ENCODE measurements at regions of chr2 and their contacts with region 1.

Region 1: DNA sequence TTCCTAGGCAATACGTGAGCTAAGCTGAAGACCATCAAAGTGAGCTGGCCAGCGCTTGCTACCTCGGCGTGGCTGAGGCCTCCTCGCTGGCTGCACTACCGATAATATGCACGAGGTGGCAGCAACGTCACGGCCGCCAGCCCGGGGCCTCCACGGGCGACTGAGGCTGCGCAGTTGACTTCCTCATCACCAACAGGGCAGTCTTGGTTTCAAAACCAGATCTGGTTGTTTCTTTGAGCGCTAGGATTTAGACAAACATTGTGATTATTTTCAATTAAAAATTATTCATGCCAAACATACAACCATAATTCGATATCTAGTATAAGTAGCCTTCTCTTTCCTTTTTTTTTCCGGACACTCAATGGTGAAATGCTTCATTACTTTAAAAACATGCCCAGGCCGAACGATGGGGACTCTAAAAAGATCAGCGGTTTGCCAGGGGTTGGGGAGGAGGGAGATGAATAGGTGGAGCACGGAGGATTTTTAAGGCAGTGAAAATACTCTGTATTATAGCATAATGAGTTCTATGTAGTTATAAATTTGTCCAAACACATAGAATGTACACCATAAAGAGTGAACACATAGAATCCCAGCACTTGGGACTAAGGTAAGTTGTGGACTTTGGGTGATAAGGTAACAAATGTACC is 52.0 kb downstream of the CYBRD1 start:
- DNase-seq: peak; percentile 83
- H3K4me3 ChIP-seq: no peak overlapping the region
- H3K27ac ChIP-seq: no peak overlapping the region
- H3K4me1 ChIP-seq: no peaks in the 10 kb centered on the region
- H3K27me3 ChIP-seq: peaks cover 7% of the 10 kb centered on the region
- CTCF ChIP-seq: peak; percentile 88 to 98 (median 97)
- EP300 ChIP-seq: no peak
- POLR2A ChIP-seq: no peak

Region 2: DNA sequence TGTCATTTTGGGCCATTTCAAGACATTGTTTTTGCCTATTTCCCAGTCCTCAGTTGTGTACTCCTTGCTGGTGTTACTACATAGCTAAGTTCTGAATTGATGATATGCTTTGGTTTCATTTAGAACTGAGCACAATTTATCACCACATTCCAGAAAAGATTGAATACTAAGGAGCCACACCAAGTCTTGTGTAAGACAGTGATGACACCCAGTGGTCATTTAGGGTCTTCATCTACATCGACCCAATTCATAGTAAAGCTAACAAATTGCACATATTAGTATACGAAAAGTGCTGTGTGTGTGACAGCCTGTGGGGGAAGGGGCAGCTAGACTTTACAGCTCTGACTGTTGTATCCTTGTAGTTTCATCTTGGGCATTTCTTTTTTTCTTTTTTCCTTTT is 539.3 kb after region 1 on chr2:
- in situ Hi-C with region 1: loop called (anchors 25 kb)
- intact Hi-C with region 1: loop called (anchors 10 kb)
- DNase-seq: no peak
- H3K4me3 ChIP-seq: no peak overlapping the region
- H3K27ac ChIP-seq: no peak overlapping the region
- H3K4me1 ChIP-seq: no peaks in the 10 kb centered on the region
- H3K27me3 ChIP-seq: peaks cover 60% of the 10 kb centered on the region
- CTCF ChIP-seq: no peak
- EP300 ChIP-seq: no peak
- POLR2A ChIP-seq: no peak

Measured in transverse colon (tissue), 4 donors.